ENCODE measurements at regions of chr3 and their contacts with region 1.

Region 1: DNA sequence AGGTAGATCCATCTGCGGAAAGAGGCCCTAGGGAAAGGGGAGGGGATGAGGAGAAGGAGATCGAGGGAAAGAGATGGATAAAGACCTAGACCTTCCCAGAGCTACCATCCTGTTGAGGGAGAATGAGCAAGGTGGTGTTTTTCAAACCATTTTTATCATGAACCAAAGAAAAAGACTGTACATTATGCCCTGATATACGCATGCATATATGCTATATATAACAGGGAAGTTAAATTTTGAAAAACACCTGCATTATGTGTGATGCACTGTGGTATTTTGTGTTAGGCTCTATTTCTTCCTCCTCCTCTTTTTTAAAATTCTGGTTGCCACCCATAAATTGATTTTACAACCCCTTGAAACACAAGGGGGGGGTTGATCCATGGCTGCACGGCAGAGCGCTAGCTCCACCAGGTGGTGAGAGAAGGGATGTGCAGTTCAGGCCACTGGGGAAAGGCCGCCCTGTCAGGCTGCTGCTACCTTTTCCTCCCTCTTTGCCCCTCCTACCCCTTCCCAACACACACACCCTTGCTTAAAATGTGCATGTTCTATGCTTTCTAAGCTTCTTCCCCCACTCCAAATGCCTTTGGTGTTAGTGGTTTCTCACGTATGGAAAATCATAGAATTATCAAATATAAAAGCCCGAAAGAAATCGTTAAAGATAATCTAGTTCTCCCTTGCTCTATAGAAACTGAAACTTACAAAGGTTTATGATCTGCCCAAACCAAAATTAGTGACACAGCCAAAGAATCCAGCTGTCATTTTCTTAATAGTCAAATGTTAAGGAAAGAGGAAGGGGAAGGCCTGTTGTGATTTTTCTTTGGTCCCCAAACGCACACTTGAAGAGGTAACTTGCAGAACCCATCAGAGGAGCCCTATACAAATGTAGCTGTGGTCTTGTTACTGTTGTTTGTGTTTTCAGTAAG is 262.0 kb upstream of the UMPS start:
- DNase-seq: peak; percentile 66
- CTCF ChIP-seq: peak; percentile 97

Region 2: GRCh38 chr3:124347418-124347817 is 120.8 kb before region 1 on chr3:
- in situ Hi-C with region 1: loop called (anchors 10 kb)
- DNase-seq: no peak
- CTCF ChIP-seq: no peak

Region 3: GRCh38 chr3:124786441-124787241 is 318.4 kb after region 1 on chr3:
- in situ Hi-C with region 1: no loop called
- DNase-seq: no peak
- CTCF ChIP-seq: no peak

Measured in GM13977 (cell line).